Activated naive CD4-positive, alpha-beta T cell treated with anti-CD3 and anti-CD28 coated beads for 36 hours (primary cell): ENCODE measurements at regions of chr3 and their contacts with region 1.

Region 1: GRCh38 chr3:187164885-187165543 is 25.7 kb upstream of the RPL39L start:
- DNase-seq: peak; percentile 47
- H3K4me3 Mint-ChIP-seq: no peak overlapping the region
- H3K27ac Mint-ChIP-seq: no peak overlapping the region
- H3K4me1 Mint-ChIP-seq: peaks cover 6% of the 10 kb centered on the region
- H3K27me3 Mint-ChIP-seq: no peaks in the 10 kb centered on the region

Region 2: DNA sequence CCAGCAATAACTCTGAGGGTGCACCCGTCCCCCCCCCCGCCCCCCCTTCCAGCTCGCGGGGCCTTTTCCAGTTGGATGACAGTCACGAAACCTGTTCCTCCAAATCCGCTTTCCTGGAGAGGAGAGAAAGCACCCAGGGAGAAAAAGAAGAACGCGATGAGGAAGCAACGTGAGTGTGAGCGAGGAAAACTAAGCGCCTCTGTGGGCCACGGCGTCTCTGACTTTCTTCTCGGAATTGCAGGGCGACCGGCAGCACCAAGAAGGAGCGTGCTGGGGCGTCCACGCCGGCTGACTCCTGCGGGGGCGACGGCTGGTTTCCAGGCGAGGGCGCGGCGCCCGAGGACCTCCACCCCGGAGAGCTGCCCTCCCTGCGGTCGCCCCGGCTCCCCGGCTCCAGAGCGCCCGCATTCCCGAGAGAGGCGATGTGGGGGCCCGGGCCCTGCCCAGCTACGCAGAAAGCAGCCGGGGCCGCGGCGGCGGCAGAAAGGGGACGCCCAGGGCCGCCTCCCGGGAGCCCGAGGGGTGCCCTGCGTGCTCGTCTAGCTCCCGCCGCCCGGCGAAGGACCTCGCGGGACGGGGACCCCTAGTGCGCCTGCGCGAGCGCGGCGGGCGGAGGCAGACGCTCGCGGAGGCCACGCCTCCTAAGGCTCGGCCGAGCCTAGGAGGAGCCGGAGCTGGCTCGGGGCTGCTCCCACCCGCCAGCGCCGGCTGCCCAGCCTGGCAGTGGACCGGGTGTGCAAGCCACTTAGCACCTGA is 337.9 kb before region 1 on chr3:
- CTCF ChIA-PET with region 1: interaction called, 11 read pairs
- intact Hi-C with region 1: loop called (anchors 5 kb)
- DNase-seq: peak; percentile 82
- H3K4me3 Mint-ChIP-seq: peak overlapping the region; percentile 78
- H3K27ac Mint-ChIP-seq: peak overlapping the region; percentile 69
- H3K4me1 Mint-ChIP-seq: peaks cover 30% of the 10 kb centered on the region
- H3K27me3 Mint-ChIP-seq: peaks cover 38% of the 10 kb centered on the region

Region 3: DNA sequence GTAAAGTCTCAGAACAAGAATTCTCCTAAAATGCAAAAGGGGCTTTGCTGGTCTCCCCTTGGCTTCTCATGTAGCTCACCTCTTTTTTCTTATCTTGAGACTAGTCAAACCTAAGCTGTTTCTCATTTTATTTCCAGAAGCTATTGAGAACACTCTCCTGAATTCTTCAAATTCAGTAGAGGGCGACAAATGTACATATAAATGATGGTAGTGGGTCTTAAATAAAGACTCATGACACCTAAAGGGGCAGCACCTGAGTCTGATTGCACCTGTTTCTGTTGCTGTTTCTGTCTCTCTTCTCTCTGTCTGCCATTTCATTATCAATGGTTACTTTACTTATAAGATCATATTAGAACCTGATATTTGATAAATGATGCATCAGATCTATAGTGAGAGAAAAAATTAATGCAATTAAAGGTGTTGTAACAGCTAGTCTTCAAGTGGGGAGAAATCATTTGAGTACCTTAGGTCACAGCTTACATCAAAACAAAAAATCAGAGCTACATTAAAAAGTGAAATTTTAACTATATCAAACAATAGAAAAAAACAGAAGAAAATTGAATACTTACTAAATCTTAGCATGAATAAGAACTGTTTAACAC is 315.5 kb before region 1 on chr3:
- CTCF ChIA-PET with region 1: interaction called, 71 read pairs
- intact Hi-C with region 1: loop called (anchors 1 kb)
- DNase-seq: peak; percentile 45
- H3K4me3 Mint-ChIP-seq: no peak overlapping the region
- H3K27ac Mint-ChIP-seq: no peak overlapping the region
- H3K4me1 Mint-ChIP-seq: peaks cover 12% of the 10 kb centered on the region
- H3K27me3 Mint-ChIP-seq: peaks cover 3% of the 10 kb centered on the region

Region 4: GRCh38 chr3:186871403-186871924 is 293.6 kb before region 1 on chr3:
- CTCF ChIA-PET with region 1: interaction called, 10 read pairs
- intact Hi-C with region 1: no loop called
- DNase-seq: no peak
- H3K4me3 Mint-ChIP-seq: no peak overlapping the region
- H3K27ac Mint-ChIP-seq: peak overlapping the region; percentile 13
- H3K4me1 Mint-ChIP-seq: peaks cover 28% of the 10 kb centered on the region
- H3K27me3 Mint-ChIP-seq: no peaks in the 10 kb centered on the region

Region 5: GRCh38 chr3:187066228-187066995 is 98.6 kb before region 1 on chr3:
- CTCF ChIA-PET with region 1: interaction called, 15 read pairs
- intact Hi-C with region 1: no loop called
- DNase-seq: peak; percentile 66
- H3K4me3 Mint-ChIP-seq: no peak overlapping the region
- H3K27ac Mint-ChIP-seq: peak overlapping the region; percentile 79
- H3K4me1 Mint-ChIP-seq: peaks cover 66% of the 10 kb centered on the region
- H3K27me3 Mint-ChIP-seq: no peaks in the 10 kb centered on the region

Region 6: DNA sequence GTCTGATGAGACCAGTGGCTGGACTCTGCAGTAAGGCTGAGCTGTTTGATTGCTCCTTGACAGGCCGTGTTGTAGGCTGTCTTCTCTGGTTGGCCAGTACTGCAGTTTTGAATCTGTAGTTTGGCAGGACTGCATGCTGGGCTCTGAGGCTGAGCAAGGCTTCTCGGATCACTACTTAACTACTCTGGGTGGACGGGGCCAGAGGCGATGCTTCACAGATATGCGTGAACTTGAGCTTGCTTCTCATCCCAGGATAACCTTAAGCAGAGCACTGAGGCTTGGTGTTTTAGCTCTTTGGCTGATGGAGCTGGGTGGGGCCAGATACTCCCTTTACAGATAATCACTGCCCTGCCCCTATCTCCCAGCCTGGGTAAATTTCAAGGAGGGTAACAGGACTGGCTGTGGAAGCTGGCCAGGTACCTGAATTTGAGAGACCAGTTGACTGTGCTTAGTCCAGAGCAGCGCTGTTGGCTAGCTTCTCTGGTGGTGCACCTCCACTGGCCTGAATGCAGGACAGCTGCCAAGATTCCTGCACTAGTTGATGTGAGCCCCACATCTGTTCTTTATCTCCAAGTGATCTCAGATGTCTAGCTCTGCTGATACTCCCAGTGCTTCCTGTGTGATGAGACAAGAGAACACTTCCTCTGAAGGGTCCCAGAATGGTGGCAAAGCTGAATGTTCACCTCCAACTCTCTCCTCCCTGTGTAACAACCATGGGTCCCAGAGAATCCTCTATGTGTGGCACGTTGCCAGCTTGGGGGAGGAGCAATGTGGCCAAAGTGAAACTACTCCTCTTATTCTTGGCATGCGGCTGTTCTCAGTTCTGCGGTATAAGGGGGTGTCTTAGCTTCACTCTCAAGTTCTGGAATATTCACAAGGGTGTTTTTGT is 63.6 kb before region 1 on chr3:
- CTCF ChIA-PET with region 1: interaction called, 12 read pairs
- intact Hi-C with region 1: no loop called
- DNase-seq: peak; percentile 67
- H3K4me3 Mint-ChIP-seq: peak overlapping the region; percentile 19
- H3K27ac Mint-ChIP-seq: no peak overlapping the region
- H3K4me1 Mint-ChIP-seq: peaks cover 25% of the 10 kb centered on the region
- H3K27me3 Mint-ChIP-seq: no peaks in the 10 kb centered on the region

Region 7: DNA sequence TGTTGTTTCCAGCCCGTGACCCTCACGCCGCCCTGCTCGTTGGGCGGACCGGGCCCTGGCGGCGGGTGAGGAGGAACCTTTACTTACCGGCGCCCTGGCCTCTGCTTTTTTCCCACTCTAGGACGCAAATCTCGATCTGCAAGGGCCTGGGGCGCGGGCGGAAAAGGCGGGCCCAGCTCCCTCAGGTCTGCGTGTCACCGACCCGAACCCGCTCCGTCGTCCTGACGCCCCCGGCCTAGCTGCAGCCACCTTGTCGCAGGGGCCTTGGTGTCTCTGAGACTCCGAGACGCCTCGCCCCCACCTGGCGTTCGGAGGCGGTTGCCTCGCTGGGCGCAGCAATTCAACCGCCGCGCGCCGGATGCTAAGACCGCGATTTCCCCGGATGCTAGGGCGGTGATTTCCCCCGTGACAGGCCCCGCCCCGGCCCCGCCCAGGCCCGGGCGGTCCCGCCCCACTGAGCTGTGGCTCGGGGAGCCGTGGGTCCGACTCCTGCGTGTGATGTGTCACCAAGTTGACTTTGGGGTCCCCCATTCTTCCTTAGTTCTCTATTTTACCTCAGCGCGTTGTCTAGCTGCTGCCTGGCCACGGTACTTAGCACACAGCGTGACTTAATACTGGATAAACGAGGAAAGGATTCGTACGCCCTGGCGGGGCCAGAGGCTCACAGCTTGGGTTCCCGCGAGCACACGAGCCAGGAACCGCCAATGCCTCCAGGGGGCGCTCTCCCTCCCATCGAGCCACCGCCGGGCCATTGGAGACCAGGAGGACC is 25.7 kb before region 1 on chr3 and contains the start of gene RPL39L:
- CTCF ChIA-PET with region 1: interaction called, 24 read pairs
- intact Hi-C with region 1: loop called (anchors 1 kb)
- DNase-seq: peak; percentile 95
- H3K4me3 Mint-ChIP-seq: peak within 1 kb of the TSS; percentile 91
- H3K27ac Mint-ChIP-seq: peak within 1 kb of the TSS; percentile 95
- H3K4me1 Mint-ChIP-seq: peaks cover 21% of the 10 kb centered on the region
- H3K27me3 Mint-ChIP-seq: no peaks in the 10 kb centered on the region
- total RNA-seq, gene RPL39L: 19.2 to 20.9 TPM